ENCODE measurements at regions of chr2 and their contacts with region 1.

Region 1: DNA sequence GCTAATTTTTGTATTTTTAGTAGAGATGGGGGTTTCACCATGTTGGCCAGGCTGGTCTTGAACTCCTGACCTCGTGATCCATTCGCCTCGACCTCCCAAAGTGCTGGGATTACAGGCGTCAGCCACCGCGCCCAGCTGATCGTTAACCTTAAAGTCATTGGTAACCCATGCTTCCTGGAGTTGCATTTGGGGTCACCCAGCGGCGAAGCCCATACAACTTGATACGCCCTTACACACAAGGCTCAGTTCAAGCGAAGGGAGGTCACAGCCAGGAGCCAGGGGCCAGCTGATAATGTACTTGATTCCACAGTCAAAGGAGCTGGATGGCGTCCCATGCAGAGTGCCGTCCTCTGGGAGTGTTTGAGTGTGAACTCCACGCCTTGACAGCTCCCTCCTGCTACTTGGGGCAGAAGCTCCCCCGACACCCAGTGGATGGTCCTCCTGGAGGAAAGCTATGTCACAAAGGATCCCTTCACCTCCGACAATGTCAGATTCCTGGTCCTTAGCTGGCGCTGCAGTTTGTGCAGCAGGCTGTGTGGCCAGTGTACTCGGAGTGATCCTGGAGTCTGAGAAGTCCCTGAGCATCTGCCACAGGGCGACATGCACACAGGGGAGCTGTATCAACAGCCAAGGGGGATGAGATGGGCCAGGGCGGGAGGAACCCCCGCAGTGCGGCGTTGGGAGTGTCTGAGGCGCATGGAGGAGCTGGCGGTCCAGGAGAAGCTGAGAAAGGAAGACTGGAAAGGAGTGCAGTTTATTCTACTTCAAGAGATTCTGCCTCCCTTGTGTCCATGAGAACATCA is 7.9 kb downstream of the CLHC1 start:
- DNase-seq: no peak
- H3K4me3 ChIP-seq: peak overlapping the region; percentile 72 to 79 (median 79)
- H3K27ac ChIP-seq: peak overlapping the region; percentile 94
- H3K4me1 ChIP-seq: no peaks in the 10 kb centered on the region
- H3K27me3 ChIP-seq: no peaks in the 10 kb centered on the region
- CTCF ChIP-seq: no peak
- POLR2A ChIP-seq: no peak

Region 2: GRCh38 chr2:54634564-54635511 is 589.3 kb before region 1 on chr2:
- intact Hi-C with region 1: no loop called
- DNase-seq: peak in 1 of 2 donors; percentile 52
- H3K4me3 ChIP-seq: no peak overlapping the region
- H3K27ac ChIP-seq: peak overlapping the region; percentile 69 to 82
- H3K4me1 ChIP-seq: no peaks in the 10 kb centered on the region
- H3K27me3 ChIP-seq: no peaks in the 10 kb centered on the region
- CTCF ChIP-seq: no peak
- POLR2A ChIP-seq: no peak

Region 3: GRCh38 chr2:55239656-55240222 is 15.6 kb after region 1 on chr2:
- intact Hi-C with region 1: no loop called
- DNase-seq: no peak
- H3K4me3 ChIP-seq: no peak overlapping the region
- H3K27ac ChIP-seq: no peak overlapping the region
- H3K4me1 ChIP-seq: no peaks in the 10 kb centered on the region
- H3K27me3 ChIP-seq: no peaks in the 10 kb centered on the region
- CTCF ChIP-seq: no peak
- POLR2A ChIP-seq: no peak

Region 4: GRCh38 chr2:55419679-55420438 is 195.7 kb after region 1 on chr2 and contains the start of gene CCDC88A:
- intact Hi-C with region 1: loop called (anchors 10 kb)
- DNase-seq: peak; percentile 89 to 94
- H3K4me3 ChIP-seq: peak within 1 kb of the TSS; percentile 91 to 95 (median 92)
- H3K27ac ChIP-seq: peak within 1 kb of the TSS; percentile 83 to 92
- H3K4me1 ChIP-seq: no peaks in the 10 kb centered on the region
- H3K27me3 ChIP-seq: no peaks in the 10 kb centered on the region
- CTCF ChIP-seq: peak in 1 of 3 donors; percentile 17
- POLR2A ChIP-seq: peak; percentile 51
- total RNA-seq, gene CCDC88A: 36.1 to 74.6 (median 50.1) TPM